ENCODE measurements at regions of chr1 and their contacts with region 1.

Region 1: DNA sequence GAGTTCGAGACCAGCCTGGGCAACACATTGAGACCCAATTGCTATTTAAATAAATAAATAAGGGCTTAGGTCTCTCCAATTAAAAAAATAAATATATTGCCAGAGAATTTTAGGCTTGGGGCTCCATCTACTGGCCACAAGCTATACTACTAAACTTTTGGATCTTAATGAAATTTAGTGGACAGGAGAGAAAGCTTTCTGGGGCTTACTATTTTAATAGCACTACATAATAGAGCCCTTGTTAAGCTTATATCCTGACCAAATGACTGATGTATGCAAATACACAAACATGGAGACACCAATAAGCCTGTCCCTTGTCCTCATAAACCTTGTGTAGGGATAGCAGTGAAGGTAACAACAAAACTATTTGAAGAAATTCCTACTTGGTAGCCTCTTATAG is 18.4 kb downstream of the CCT3 start:
- DNase-seq: peak; percentile 38
- H3K4me3 Mint-ChIP-seq: no peak overlapping the region
- H3K27ac Mint-ChIP-seq: no peak overlapping the region
- H3K4me1 Mint-ChIP-seq: no peaks in the 10 kb centered on the region
- H3K27me3 Mint-ChIP-seq: no peaks in the 10 kb centered on the region

Region 2: GRCh38 chr1:156262461-156263287 is 57.0 kb before region 1 on chr1:
- CTCF ChIA-PET with region 1: interaction called, 3 read pairs
- intact Hi-C with region 1: loop called (anchors 5 kb)
- DNase-seq: no peak
- H3K4me3 Mint-ChIP-seq: no peak overlapping the region
- H3K27ac Mint-ChIP-seq: peak overlapping the region; percentile 20
- H3K4me1 Mint-ChIP-seq: peaks cover 12% of the 10 kb centered on the region
- H3K27me3 Mint-ChIP-seq: no peaks in the 10 kb centered on the region

Region 3: DNA sequence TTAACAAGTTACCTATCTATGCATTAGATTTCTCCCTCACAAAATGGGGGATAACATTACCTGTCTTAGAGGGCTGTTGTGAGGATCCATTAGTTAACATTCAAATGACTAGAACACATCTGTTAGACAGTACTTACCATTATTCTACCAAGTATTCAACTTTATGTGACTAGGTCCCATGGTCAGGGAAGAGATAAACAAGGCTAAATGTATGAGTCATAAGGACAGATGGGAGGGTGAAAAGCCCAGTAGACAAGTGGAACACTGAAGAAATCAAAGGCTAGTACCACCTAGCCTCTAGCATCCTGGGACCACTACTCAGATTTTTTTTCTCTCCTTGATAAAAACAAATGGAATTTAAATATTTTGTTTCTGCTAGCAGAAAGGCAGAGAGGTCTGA is 11.6 kb before region 1 on chr1:
- CTCF ChIA-PET with region 1: interaction called, 15 read pairs
- intact Hi-C with region 1: no loop called
- DNase-seq: no peak
- H3K4me3 Mint-ChIP-seq: no peak overlapping the region
- H3K27ac Mint-ChIP-seq: no peak overlapping the region
- H3K4me1 Mint-ChIP-seq: no peaks in the 10 kb centered on the region
- H3K27me3 Mint-ChIP-seq: no peaks in the 10 kb centered on the region

Region 4: DNA sequence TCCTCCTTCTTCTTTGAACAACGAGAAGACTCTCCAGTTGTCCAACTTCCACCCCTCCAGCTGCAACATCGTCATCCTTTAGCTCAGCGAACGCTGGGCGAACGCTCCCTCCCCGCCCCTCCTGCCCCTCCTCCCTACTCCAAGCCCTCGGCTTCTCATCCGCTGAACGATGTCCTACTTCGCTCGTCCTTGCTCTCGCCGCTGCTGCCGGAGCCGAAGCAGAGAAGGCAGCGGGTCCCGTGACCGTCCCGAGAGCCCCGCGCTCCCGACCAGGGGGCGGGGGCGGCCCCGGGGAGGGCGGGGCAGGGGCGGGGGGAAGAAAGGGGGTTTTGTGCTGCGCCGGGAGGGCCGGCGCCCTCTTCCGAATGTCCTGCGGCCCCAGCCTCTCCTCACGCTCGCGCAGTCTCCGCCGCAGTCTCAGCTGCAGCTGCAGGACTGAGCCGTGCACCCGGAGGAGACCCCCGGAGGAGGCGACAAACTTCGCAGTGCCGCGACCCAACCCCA is 322.1 kb after region 1 on chr1 and contains the start of gene BCAN:
- CTCF ChIA-PET with region 1: no interaction called
- intact Hi-C with region 1: no loop called
- DNase-seq: peak; percentile 32
- H3K4me3 Mint-ChIP-seq: peak within 1 kb of the TSS; percentile 10
- H3K27ac Mint-ChIP-seq: no peak within 1 kb of the TSS
- H3K4me1 Mint-ChIP-seq: peaks cover 16% of the 10 kb centered on the region
- H3K27me3 Mint-ChIP-seq: peaks cover 78% of the 10 kb centered on the region
- total RNA-seq, gene BCAN: not detected

Measured in activated naive CD4-positive, alpha-beta T cell treated with anti-CD3 and anti-CD28 coated beads for 36 hours (primary cell).